Activated CD8-positive, alpha-beta memory T cell treated with anti-CD3 and anti-CD28 coated beads, Interleukin-2, amount 10 ng/mL, durations not matched to agents 7 days and 5 days (primary cell): ENCODE measurements at regions of chr1 and their contacts with region 1.

Region 1: GRCh38 chr1:16625497-16626408 is 12.4 kb upstream of the NBPF1 start:
- DNase-seq: no peak
- ATAC-seq: no peak
- H3K4me3 Mint-ChIP-seq: no peak overlapping the region
- H3K27ac Mint-ChIP-seq: no peak overlapping the region
- H3K4me1 Mint-ChIP-seq: peaks cover 6% of the 10 kb centered on the region
- H3K27me3 Mint-ChIP-seq: no peaks in the 10 kb centered on the region

Region 2: GRCh38 chr1:16276302-16277030 is 349.3 kb before region 1 on chr1:
- CTCF ChIA-PET with region 1: no interaction called
- DNase-seq: no peak
- ATAC-seq: no peak
- H3K4me3 Mint-ChIP-seq: no peak overlapping the region
- H3K27ac Mint-ChIP-seq: no peak overlapping the region
- H3K4me1 Mint-ChIP-seq: peaks cover 1% of the 10 kb centered on the region
- H3K27me3 Mint-ChIP-seq: no peaks in the 10 kb centered on the region

Region 3: DNA sequence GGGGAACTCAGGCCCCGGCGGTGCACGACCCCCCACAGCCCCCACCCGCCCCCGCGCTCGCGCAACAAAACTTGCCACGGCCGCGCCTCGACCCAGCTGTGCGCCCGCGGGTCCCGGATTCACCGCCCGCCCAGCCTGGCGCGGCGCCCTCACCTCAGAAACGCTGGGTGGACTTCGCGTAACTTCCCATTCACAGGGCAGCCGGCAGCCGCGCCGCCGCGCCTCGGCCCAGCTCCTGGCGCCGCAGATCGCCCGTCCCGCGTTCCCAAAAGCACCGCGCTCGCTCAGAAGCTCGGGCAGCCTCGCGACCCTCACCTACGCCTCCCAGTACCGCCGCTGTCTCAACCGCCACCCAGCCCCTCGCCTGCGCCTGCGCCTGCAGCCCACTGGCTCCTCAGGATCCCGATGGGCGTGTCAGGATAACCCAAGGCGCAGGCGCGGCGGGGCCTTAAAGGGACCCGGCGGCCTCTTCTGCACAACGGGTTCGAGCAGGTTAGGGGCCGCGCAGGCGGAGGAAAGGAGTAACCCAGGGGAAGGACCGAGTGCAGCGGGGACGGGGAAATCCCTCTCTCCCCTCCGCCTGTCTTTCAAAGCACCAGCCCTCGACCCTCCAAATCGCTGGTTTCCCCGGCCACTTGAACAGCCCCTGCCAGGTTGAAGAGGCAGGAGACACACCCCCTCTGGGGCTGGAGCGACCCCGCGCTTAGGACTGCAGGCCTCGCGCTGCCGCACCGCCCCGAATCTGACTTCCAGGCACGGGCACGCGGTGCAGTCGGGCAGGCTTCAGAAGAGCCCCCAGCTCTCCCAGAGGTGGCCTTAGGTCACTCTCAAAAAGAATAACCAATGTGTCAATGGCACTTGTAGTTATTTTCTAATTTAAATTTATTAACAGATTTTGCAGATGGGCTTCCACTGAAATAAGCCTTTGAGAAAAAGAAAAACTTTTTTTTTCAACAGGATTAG is 12.3 kb before region 1 on chr1 and contains the start of gene NBPF1:
- CTCF ChIA-PET with region 1: interaction called, 20 read pairs
- DNase-seq: peak; percentile 89
- ATAC-seq: peak; percentile 96
- H3K4me3 Mint-ChIP-seq: no peak within 1 kb of the TSS
- H3K27ac Mint-ChIP-seq: no peak within 1 kb of the TSS
- H3K4me1 Mint-ChIP-seq: no peaks in the 10 kb centered on the region
- H3K27me3 Mint-ChIP-seq: no peaks in the 10 kb centered on the region
- total RNA-seq, gene NBPF1: 2.8 to 3.1 TPM